A549 (cell line): ENCODE measurements at regions of chr9 and their contacts with region 1.

Region 1: DNA sequence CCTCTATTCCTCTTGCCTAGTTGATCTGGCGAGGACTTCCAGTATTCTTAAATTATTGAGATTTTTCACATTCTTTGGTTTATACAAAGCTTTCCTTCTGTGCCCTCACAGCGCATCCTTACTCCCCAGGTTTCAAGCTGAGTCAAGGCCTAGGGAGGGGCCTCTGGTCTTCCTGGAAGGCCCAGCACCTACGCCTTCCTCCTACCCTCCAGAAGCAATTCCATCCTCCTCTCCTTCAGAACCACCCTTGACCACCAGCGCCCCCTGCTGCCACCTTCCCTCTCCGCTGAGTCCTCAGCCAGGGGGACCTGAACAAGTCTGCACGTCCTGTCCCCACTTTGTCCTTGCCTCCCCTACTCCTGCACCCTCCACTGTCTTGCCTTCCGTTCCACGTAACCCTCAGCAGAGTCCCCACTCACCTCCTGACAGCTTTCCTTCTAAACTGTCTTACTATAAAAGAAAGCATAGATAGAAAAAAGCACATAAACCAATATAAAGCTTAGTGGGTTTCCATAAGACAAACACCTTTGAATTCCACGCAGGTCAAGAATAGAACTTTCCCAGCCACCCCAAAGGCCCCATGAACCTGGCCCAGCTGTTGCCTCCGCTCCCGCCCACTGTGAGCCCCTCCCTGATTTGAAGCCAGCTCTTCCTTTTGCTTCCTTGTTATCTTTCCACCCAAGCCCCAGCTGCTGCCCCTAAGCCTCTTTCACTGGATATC is 63.0 kb upstream of the CTSL start:
- DNase-seq: peak; percentile 83 to 93
- ATAC-seq: peak; percentile 87 to 97
- H3K4me3 ChIP-seq: no peak overlapping the region
- H3K27ac ChIP-seq: peak overlapping the region; percentile 34 to 65; a peak in 5 of 6 replicates
- H3K4me1 ChIP-seq: peaks cover 23% of the 10 kb centered on the region
- CTCF ChIP-seq: peak; percentile 82
- EP300 ChIP-seq: no peak
- POLR2A ChIP-seq: no peak
- RAD21 ChIP-seq: peak; percentile 91 to 96

Region 2: GRCh38 chr9:87336914-87337333 is 326.0 kb before region 1 on chr9:
- CTCF ChIA-PET with region 1: interaction called, 86 read pairs
- POLR2A ChIA-PET with region 1: no interaction called
- DNase-seq: peak; percentile 44 to 88
- ATAC-seq: peak; percentile 73 to 90
- H3K4me3 ChIP-seq: peak overlapping the region; percentile 48
- H3K27ac ChIP-seq: peak overlapping the region; percentile 73 to 85
- H3K4me1 ChIP-seq: peaks cover 17% of the 10 kb centered on the region
- CTCF ChIP-seq: peak; percentile 92
- EP300 ChIP-seq: no peak
- POLR2A ChIP-seq: no peak
- RAD21 ChIP-seq: peak; percentile 98

Region 3: DNA sequence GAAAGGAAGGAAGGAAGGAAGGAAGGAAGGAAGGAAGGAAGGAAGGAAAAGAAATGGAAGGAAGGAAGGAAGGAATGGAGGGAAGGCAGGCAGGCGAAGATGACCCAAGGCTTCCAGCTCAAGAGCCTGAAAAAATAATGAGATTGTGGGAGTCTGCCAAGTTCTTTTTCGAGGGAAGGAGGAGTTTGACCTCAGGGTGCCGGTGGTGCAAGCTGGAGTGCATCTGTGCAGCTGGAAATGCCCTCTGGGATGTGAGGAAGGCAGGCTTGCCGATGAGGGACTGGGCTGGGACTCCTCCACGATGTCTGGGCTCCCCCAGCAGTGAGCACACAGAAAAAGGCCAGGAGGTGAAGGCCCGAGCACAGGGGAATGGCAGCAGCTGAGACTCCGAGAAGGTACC is 320.2 kb before region 1 on chr9:
- CTCF ChIA-PET with region 1: interaction called, 86 read pairs
- POLR2A ChIA-PET with region 1: no interaction called
- DNase-seq: no peak
- ATAC-seq: peak in 1 of 2 experiments; percentile 35; a peak in 3 of 6 replicates
- H3K4me3 ChIP-seq: no peak overlapping the region
- H3K27ac ChIP-seq: peak overlapping the region; percentile 37 to 77; a peak in 3 of 6 replicates
- H3K4me1 ChIP-seq: peaks cover 19% of the 10 kb centered on the region
- CTCF ChIP-seq: no peak
- EP300 ChIP-seq: no peak
- POLR2A ChIP-seq: no peak
- RAD21 ChIP-seq: no peak

Region 4: GRCh38 chr9:87497604-87498045 is 165.3 kb before region 1 on chr9 and contains the start of gene DAPK1:
- CTCF ChIA-PET with region 1: interaction called, 15 read pairs
- POLR2A ChIA-PET with region 1: no interaction called
- DNase-seq: peak; percentile 79 to 83
- ATAC-seq: peak; percentile 83 to 91
- H3K4me3 ChIP-seq: peak within 1 kb of the TSS; percentile 88
- H3K27ac ChIP-seq: peak within 1 kb of the TSS; percentile 94 to 98
- H3K4me1 ChIP-seq: peaks cover 44% of the 10 kb centered on the region
- CTCF ChIP-seq: peak; percentile 29; the same call in 2 of the 3 replicates
- EP300 ChIP-seq: no peak
- POLR2A ChIP-seq: peak; percentile 37
- RAD21 ChIP-seq: peak; percentile 30 to 53; a peak in 4 of 5 replicates
- polyA plus RNA-seq, gene DAPK1: 67.2 and 68.5 TPM in 2 replicates

Region 5: GRCh38 chr9:87647114-87647513 is 15.9 kb before region 1 on chr9:
- CTCF ChIA-PET with region 1: interaction called, 10 read pairs
- POLR2A ChIA-PET with region 1: no interaction called
- DNase-seq: no peak
- ATAC-seq: no peak
- H3K4me3 ChIP-seq: no peak overlapping the region
- H3K27ac ChIP-seq: no peak overlapping the region
- H3K4me1 ChIP-seq: no peaks in the 10 kb centered on the region
- CTCF ChIP-seq: no peak
- EP300 ChIP-seq: no peak
- POLR2A ChIP-seq: no peak
- RAD21 ChIP-seq: no peak